ENCODE measurements at regions of chr1 and their contacts with region 1.

Region 1: GRCh38 chr1:147515046-147515869 is 26.0 kb upstream of the BCL9 start:
- DNase-seq: peak; percentile 66 to 71
- H3K4me3 ChIP-seq: no peak overlapping the region
- H3K4me3 Mint-ChIP-seq: no peak overlapping the region
- H3K27ac Mint-ChIP-seq: peak overlapping the region; percentile 36
- H3K4me1 ChIP-seq: peaks cover 23% of the 10 kb centered on the region
- H3K4me1 Mint-ChIP-seq: peaks cover 18% of the 10 kb centered on the region
- H3K27me3 ChIP-seq: no peaks in the 10 kb centered on the region
- H3K27me3 Mint-ChIP-seq: no peaks in the 10 kb centered on the region
- CTCF ChIP-seq: peak; percentile 30 to 32

Region 2: DNA sequence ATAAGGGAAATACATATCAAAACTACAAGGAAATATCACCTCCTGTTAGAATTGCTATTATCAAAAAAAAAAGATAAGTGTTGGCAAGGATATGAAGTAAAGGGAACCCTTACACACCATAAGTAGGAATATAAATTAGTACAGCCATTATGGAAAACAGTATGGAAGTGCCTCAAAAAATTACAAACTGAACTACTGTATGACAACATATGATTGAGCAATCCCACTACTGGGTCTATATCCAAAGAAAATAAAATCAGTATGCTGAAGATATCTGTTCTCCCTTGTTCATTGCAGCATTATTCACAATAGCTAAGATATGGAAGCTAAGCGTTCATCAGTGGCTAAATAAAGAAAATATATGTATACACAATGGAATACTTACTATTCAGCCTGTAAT is 213.0 kb before region 1 on chr1:
- CTCF ChIA-PET with region 1: no interaction called
- POLR2A ChIA-PET with region 1: no interaction called
- intact Hi-C with region 1: no loop called
- DNase-seq: no peak
- H3K4me3 ChIP-seq: no peak overlapping the region
- H3K4me3 Mint-ChIP-seq: no peak overlapping the region
- H3K27ac Mint-ChIP-seq: no peak overlapping the region
- H3K4me1 ChIP-seq: no peaks in the 10 kb centered on the region
- H3K4me1 Mint-ChIP-seq: no peaks in the 10 kb centered on the region
- H3K27me3 ChIP-seq: no peaks in the 10 kb centered on the region
- H3K27me3 Mint-ChIP-seq: no peaks in the 10 kb centered on the region
- CTCF ChIP-seq: no peak

Region 3: GRCh38 chr1:147551036-147551435 is 35.8 kb after region 1 on chr1:
- CTCF ChIA-PET with region 1: no interaction called
- POLR2A ChIA-PET with region 1: no interaction called
- intact Hi-C with region 1: loop called (anchors 5 kb)
- DNase-seq: no peak
- H3K4me3 ChIP-seq: no peak overlapping the region
- H3K4me3 Mint-ChIP-seq: no peak overlapping the region
- H3K27ac Mint-ChIP-seq: no peak overlapping the region
- H3K4me1 ChIP-seq: no peaks in the 10 kb centered on the region
- H3K4me1 Mint-ChIP-seq: no peaks in the 10 kb centered on the region
- H3K27me3 ChIP-seq: no peaks in the 10 kb centered on the region
- H3K27me3 Mint-ChIP-seq: no peaks in the 10 kb centered on the region
- CTCF ChIP-seq: no peak

Region 4: DNA sequence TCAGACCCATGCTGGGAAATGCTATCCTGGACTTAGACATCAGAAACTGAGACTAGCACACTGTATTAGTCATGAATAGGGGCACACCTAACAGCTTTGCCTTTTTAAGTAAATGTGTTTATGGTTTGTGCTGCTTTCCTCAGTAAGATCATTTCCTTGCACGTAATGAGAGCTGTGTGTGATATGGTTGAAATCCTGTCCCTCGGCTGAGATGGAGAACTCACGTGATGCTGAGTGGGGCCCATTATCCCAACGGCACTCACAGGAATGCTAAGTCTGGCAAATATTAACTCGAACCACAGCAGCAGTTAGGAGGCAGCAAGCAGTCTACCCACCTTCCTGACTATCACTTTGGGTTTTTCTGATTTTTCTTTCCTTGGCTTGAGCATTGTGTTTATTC is 64.3 kb after region 1 on chr1:
- CTCF ChIA-PET with region 1: no interaction called
- POLR2A ChIA-PET with region 1: no interaction called
- intact Hi-C with region 1: loop called (anchors 5 kb)
- DNase-seq: peak; percentile 73 to 84
- H3K4me3 ChIP-seq: no peak overlapping the region
- H3K4me3 Mint-ChIP-seq: peak overlapping the region; percentile 49
- H3K27ac Mint-ChIP-seq: peak overlapping the region; percentile 46
- H3K4me1 ChIP-seq: peaks cover 38% of the 10 kb centered on the region
- H3K4me1 Mint-ChIP-seq: peaks cover 23% of the 10 kb centered on the region
- H3K27me3 ChIP-seq: no peaks in the 10 kb centered on the region
- H3K27me3 Mint-ChIP-seq: no peaks in the 10 kb centered on the region
- CTCF ChIP-seq: no peak

Region 5: DNA sequence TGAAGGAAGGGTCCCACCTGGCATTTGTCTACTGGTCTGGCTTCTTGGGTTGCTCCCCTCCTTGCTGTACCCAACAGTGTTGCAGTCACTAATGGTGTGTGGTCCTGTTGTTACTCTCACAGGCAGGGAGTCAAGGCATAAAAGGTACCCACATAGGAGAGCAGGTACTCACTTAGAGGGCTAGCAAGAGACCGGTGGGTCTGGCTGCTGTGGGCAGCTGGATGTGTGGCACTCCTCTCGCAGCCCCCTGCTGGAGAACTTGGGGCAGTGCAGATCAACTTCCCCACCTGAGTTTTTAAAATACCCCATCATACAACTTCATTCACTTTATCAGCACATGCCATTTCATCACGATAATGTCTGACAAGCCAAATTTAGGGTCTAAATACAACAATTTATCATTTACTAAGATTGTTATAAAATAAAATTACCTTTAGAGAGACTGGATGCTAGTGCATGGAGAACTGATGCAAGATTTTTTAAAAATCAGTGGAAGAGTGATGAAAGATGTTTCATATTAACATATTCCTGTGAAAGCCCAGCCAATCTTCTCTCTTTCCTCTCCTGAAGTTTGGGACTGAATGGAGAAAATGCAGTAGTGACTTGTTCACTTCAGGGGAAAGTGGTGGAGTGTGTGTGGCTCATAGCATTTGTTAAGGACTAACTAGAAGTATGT is 112.3 kb after region 1 on chr1:
- CTCF ChIA-PET with region 1: no interaction called
- POLR2A ChIA-PET with region 1: no interaction called
- intact Hi-C with region 1: loop called (anchors 1 kb)
- DNase-seq: peak; percentile 59 to 65
- H3K4me3 ChIP-seq: no peak overlapping the region
- H3K4me3 Mint-ChIP-seq: no peak overlapping the region
- H3K27ac Mint-ChIP-seq: no peak overlapping the region
- H3K4me1 ChIP-seq: peaks cover 30% of the 10 kb centered on the region
- H3K4me1 Mint-ChIP-seq: peaks cover 35% of the 10 kb centered on the region
- H3K27me3 ChIP-seq: no peaks in the 10 kb centered on the region
- H3K27me3 Mint-ChIP-seq: no peaks in the 10 kb centered on the region
- CTCF ChIP-seq: peak; percentile 88 to 90

Region 6: DNA sequence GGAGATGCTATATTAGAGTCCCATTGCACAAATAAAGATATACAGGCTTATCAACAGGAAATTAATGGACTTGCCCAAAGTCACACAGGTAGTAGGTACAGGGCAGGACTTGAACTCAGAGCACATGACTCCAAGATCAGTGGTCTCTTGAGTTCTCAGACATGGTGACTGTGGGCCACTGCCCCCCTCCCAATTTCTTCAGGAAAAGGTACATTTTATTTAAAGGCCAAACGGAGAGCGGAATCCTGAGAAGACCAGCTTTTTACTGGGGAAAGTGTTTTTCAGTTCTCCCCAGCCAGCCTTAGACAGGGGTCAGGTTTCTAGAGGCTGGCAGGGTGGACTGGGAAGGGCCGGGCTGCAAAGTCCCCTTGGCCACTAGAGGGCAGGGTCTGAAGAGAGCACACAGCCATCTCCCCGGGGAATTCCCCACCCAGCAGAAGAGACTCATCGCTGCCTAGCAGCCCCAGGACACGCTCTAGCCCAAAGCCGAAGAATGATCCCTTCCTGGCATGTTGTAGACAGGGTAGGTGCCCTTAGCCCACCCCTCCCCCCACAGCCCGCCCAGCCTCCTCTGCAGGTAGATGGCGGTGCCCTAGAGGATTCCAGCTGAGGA is 125.4 kb after region 1 on chr1:
- CTCF ChIA-PET with region 1: no interaction called
- POLR2A ChIA-PET with region 1: no interaction called
- intact Hi-C with region 1: loop called (anchors 1 kb)
- DNase-seq: peak; percentile 72 to 81
- H3K4me3 ChIP-seq: no peak overlapping the region
- H3K4me3 Mint-ChIP-seq: no peak overlapping the region
- H3K27ac Mint-ChIP-seq: no peak overlapping the region
- H3K4me1 ChIP-seq: peaks cover 18% of the 10 kb centered on the region
- H3K4me1 Mint-ChIP-seq: peaks cover 11% of the 10 kb centered on the region
- H3K27me3 ChIP-seq: no peaks in the 10 kb centered on the region
- H3K27me3 Mint-ChIP-seq: no peaks in the 10 kb centered on the region
- CTCF ChIP-seq: peak; percentile 83 to 91